Colonic mucosa (tissue), 4 donors: ENCODE measurements at regions of chr7 and their contacts with region 1.

Region 1: GRCh38 chr7:130560970-130561369 is 69.1 kb downstream of the MEST start:
- DNase-seq: no peak
- H3K4me3 ChIP-seq: no peak overlapping the region
- H3K27ac ChIP-seq: no peak overlapping the region
- H3K4me1 ChIP-seq: no peaks in the 10 kb centered on the region
- H3K27me3 ChIP-seq: no peaks in the 10 kb centered on the region
- CTCF ChIP-seq: no peak

Region 2: DNA sequence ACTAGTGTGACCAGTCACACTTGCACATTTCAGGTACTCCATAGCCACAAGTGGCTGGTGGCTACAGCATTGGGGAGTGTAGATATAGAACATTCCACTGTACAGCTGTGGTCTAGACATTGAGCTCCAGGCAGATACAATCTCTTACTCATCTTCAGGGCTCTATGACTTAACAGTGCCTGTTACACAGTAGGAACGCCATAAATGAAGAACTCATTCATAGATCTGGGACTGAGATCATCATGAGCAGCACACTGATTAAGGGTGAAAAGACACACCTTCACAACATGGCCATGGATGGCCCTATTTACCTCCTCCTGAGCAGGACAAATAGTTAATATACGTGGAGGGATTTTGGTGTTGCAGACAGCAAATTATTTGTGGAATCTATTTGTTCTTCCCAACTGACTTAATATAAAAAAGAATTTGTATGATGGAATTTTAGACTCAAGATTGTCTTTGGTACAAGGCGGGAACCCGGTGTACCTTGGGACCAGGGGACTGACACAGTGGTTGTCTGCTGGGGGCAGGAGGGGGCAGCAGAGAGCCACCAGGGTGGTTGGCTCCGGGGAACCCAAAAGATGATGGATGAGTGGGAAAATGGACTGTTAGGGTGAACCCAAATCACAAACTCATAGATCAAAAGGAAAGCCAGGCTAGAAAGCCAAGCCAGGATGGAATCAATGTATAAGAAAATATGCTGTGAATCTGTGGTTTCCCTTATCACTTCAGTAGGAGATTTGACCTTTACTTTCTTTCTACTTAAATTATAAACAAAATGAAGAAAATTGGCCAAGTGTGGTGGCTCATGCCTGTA is 318.6 kb before region 1 on chr7:
- intact Hi-C with region 1: loop called (anchors 5 kb)
- DNase-seq: peak; percentile 60
- H3K4me3 ChIP-seq: no peak overlapping the region
- H3K27ac ChIP-seq: no peak overlapping the region
- H3K4me1 ChIP-seq: no peaks in the 10 kb centered on the region
- H3K27me3 ChIP-seq: no peaks in the 10 kb centered on the region
- CTCF ChIP-seq: peak; percentile 82

Region 3: GRCh38 chr7:130356121-130356875 is 204.7 kb before region 1 on chr7:
- intact Hi-C with region 1: no loop called
- DNase-seq: no peak
- H3K4me3 ChIP-seq: no peak overlapping the region
- H3K27ac ChIP-seq: peak overlapping the region; percentile 60
- H3K4me1 ChIP-seq: no peaks in the 10 kb centered on the region
- H3K27me3 ChIP-seq: no peaks in the 10 kb centered on the region
- CTCF ChIP-seq: no peak

Region 4: DNA sequence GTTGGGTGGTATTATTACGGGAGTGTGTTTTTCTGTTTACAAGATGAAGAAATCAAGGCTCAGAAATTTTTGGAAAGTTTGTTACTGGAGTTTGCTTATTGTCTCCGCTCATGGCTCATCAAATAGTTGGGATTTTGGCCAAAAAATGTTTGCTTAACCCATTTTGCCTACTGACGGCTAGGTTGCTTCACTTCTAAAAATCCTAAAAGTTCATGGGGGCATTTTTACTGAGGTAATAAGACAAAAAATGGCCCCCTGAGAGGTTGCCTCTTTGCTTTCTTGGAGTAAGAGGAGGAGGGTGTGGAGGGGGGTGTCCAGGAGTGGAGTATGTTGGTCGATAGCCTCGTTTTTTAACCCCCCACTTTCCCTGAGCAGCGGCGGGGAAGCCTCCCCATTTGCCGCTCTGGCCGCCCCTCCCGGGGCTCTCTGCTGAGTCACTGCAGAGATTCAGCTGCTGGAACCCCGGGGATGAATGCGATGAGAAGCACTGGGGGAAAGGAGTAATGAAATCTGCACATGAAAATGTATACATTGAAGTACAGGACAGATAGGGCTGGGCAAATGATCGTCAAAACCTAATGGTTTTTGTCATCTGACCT is 67.6 kb before region 1 on chr7:
- intact Hi-C with region 1: no loop called
- DNase-seq: no peak
- H3K4me3 ChIP-seq: no peak overlapping the region
- H3K27ac ChIP-seq: no peak overlapping the region
- H3K4me1 ChIP-seq: no peaks in the 10 kb centered on the region
- H3K27me3 ChIP-seq: no peaks in the 10 kb centered on the region
- CTCF ChIP-seq: no peak